ENCODE measurements at regions of chr11 and their contacts with region 1.

Region 1: DNA sequence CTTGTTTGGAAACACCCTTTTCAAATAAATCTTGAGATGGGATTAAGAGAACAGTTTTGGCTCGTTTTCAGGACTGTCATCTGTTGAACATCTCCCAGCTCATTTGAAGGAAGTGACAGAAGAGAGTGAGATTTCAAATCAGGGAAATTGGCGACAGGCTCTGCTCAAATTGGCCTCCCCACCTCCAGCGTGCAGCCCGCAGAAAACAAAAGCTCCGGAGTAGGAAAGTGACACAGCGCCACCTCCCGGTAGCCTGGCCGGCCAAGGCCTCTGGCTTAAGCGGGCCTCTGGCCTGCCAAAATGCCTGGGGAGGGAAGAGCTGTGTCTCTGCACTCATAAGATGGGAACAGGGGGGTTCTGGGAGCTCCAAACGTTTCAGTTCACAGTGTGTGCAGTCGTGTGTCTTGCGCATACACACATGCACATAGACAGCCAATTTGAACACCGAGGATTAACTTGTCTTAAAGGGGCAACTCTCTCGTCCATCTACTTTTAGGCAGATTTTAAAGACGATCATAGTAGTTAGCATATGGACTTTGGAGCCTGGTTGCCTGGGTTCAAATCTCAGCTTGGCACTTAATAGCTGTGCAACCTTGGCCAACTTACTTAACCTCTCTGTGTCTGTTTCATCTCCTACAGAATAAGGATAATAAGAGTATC is 132.7 kb upstream of the RCN1 start:
- DNase-seq: peak; percentile 77
- ATAC-seq: peak; percentile 55
- H3K4me3 Mint-ChIP-seq: no peak overlapping the region
- H3K27ac Mint-ChIP-seq: no peak overlapping the region
- H3K4me1 Mint-ChIP-seq: no peaks in the 10 kb centered on the region
- H3K27me3 Mint-ChIP-seq: no peaks in the 10 kb centered on the region
- CTCF ChIP-seq: peak; percentile 70

Region 2: DNA sequence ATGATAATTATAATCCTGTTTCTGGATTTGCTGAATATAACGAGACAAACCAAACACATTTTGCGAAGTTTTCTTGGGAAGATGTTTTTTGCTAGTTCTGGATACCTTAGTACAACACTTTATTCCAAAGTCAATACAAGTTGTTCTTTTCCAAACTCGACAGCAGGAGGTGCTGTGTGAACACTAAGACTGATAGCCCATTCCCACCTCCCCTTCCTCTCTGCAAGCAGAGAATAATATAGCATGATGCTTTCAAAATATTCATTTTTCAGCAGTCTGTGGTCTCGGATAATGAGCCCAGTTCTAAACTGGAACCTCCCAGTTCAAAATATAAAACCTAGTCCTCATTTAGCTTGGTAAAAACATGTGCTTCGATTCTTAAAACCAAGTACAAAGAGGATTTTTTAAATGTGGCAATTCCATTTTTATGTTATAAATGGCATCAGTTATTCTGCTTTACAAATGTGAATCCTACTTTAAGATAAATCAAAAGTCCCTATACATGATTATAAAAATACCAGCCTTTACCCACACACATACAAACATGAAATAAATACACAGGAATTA is 717.8 kb before region 1 on chr11:
- CTCF ChIA-PET with region 1: interaction called, 19 read pairs
- POLR2A ChIA-PET with region 1: no interaction called
- intact Hi-C with region 1: loop called (anchors 5 kb)
- DNase-seq: peak; percentile 23
- ATAC-seq: no peak
- H3K4me3 Mint-ChIP-seq: no peak overlapping the region
- H3K27ac Mint-ChIP-seq: no peak overlapping the region
- H3K4me1 Mint-ChIP-seq: no peaks in the 10 kb centered on the region
- H3K27me3 Mint-ChIP-seq: peaks cover 3% of the 10 kb centered on the region
- CTCF ChIP-seq: peak; percentile 61

Region 3: DNA sequence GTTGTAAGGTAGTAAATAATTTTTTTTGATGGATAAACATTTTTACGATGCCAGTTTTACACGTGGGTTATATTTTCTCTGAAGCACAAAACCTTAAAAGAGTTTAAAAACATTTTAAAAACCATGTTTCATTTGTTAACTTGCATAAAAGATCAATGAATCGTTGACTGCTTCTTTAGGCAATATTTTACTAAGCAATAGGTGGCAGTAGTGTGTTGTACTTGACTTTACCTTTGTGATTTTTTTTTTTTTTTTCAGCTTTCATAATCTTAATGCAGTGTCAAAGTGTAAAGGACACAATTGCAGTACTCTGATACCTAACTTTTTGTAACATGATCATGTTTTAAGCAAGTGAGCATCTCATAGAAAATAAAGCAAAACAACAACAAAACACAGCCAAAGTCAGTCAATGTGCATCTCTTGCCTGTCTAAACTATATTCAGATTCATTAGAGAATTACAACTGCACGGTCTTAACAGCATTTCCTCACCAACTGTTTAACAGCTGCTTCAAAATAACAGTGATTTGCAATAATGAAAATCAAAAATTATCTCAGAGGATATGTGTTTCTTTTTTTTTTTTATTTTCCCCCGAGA is 560.9 kb before region 1 on chr11:
- CTCF ChIA-PET with region 1: interaction called, 4 read pairs
- POLR2A ChIA-PET with region 1: no interaction called
- intact Hi-C with region 1: loop called (anchors 1 kb)
- DNase-seq: no peak
- ATAC-seq: no peak
- H3K4me3 Mint-ChIP-seq: no peak overlapping the region
- H3K27ac Mint-ChIP-seq: no peak overlapping the region
- H3K4me1 Mint-ChIP-seq: no peaks in the 10 kb centered on the region
- H3K27me3 Mint-ChIP-seq: no peaks in the 10 kb centered on the region
- CTCF ChIP-seq: peak; percentile 61

Region 4: GRCh38 chr11:31641477-31642062 is 316.6 kb before region 1 on chr11:
- CTCF ChIA-PET with region 1: interaction called, 11 read pairs
- POLR2A ChIA-PET with region 1: no interaction called
- intact Hi-C with region 1: no loop called
- DNase-seq: peak; percentile 1
- ATAC-seq: no peak
- H3K4me3 Mint-ChIP-seq: no peak overlapping the region
- H3K27ac Mint-ChIP-seq: no peak overlapping the region
- H3K4me1 Mint-ChIP-seq: no peaks in the 10 kb centered on the region
- H3K27me3 Mint-ChIP-seq: no peaks in the 10 kb centered on the region
- CTCF ChIP-seq: peak; percentile 53

Region 5: DNA sequence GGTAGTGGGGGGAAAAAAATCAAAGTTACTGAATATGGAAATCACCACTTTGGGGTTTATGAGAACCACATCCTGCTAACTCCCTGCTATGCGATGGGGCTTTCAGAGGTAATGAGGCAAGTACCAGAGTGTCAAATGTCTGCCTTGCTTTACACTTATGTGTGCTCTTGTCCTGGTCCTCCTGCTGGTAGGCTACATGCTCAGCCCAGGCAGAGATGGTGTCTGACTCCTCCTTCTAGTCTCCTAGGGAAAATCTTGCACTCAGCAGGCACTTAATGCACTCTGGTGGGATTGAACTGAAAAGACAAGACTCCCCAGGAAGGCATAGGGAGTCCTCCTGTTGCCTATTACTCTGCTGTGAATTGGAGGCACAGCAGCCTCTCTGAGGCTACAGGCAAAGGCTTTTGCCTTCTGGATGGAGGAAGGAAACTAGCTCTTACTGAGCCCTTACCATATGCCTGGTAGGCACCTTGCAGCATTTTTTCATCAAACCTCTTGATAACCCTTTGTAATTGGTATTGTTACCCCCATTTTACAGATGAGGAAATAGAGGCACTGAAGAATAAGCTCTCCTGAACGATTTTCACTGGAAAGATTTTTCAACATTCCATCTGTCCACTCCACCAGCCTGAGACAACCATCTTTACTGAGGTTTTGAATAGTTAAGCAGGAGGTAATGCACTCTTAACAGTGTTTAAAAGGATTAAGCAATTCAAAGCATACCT is 15.0 kb before region 1 on chr11:
- CTCF ChIA-PET with region 1: interaction called, 15 read pairs
- POLR2A ChIA-PET with region 1: no interaction called
- intact Hi-C with region 1: no loop called
- DNase-seq: peak; percentile 5
- ATAC-seq: peak; percentile 64
- H3K4me3 Mint-ChIP-seq: no peak overlapping the region
- H3K27ac Mint-ChIP-seq: no peak overlapping the region
- H3K4me1 Mint-ChIP-seq: peaks cover 6% of the 10 kb centered on the region
- H3K27me3 Mint-ChIP-seq: peaks cover 24% of the 10 kb centered on the region
- CTCF ChIP-seq: no peak

Region 6: DNA sequence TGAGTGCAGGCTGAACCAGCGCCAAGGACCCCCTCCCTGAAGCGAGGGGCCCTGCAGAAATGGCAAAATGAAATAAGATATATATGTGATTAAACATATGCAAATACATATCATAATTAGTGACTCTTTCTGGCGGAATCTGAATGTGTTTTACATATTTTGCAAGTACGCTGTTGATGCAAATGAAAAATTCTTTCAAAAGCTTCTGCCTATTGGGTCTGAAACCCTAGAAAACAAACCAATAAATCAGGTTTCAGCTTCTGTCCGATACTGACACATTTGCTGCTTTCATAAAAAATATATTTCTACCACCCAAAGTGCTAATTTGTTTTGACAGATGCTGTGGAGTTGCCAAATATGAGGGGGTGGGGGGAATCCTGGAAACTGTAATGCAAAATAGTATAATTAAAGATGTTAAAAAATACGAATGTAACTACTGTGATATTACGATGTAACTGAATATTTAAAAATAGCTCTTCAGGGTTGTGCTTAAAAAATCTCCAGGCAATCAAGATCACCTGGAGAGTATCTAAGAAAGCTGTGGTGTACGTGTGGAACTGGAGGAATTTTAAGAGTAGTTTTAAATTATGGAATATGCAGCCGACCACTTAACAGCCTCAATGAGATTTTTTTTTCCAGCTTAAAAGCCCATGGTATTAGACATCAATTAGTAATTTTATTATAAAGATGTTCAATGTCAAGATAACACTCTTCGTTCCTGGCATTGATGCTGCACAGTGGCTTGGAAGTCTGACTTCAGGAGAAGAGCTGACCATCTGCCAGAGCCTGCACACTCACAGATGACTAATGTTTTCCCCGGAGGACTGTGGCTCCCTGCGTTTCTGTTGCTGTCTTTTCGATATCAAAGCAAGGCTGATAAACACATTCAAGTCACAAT is 10.5 kb after region 1 on chr11:
- CTCF ChIA-PET with region 1: interaction called, 38 read pairs
- POLR2A ChIA-PET with region 1: no interaction called
- intact Hi-C with region 1: no loop called
- DNase-seq: no peak
- ATAC-seq: no peak
- H3K4me3 Mint-ChIP-seq: no peak overlapping the region
- H3K27ac Mint-ChIP-seq: no peak overlapping the region
- H3K4me1 Mint-ChIP-seq: no peaks in the 10 kb centered on the region
- H3K27me3 Mint-ChIP-seq: peaks cover 2% of the 10 kb centered on the region
- CTCF ChIP-seq: no peak

Region 7: GRCh38 chr11:31974366-31975136 is 16.3 kb after region 1 on chr11:
- CTCF ChIA-PET with region 1: interaction called, 38 read pairs
- POLR2A ChIA-PET with region 1: no interaction called
- intact Hi-C with region 1: no loop called
- DNase-seq: no peak
- ATAC-seq: no peak
- H3K4me3 Mint-ChIP-seq: no peak overlapping the region
- H3K27ac Mint-ChIP-seq: no peak overlapping the region
- H3K4me1 Mint-ChIP-seq: no peaks in the 10 kb centered on the region
- H3K27me3 Mint-ChIP-seq: peaks cover 19% of the 10 kb centered on the region
- CTCF ChIP-seq: no peak

Measured in activated CD8-positive, alpha-beta T cell treated with anti-CD3 and anti-CD28 coated beads for 36 hours (primary cell).